ENCODE measurements at regions of chr2 and their contacts with region 1.

Region 1: GRCh38 chr2:191878576-191879279 is 31.8 kb upstream of the CAVIN2 start:
- DNase-seq: peak; percentile 91
- H3K4me3 ChIP-seq: no peak overlapping the region
- H3K27ac ChIP-seq: peak overlapping the region; percentile 44
- H3K4me1 ChIP-seq: peaks cover 18% of the 10 kb centered on the region
- H3K27me3 ChIP-seq: no peaks in the 10 kb centered on the region
- CTCF ChIP-seq: no peak
- POLR2A ChIP-seq: no peak

Region 2: DNA sequence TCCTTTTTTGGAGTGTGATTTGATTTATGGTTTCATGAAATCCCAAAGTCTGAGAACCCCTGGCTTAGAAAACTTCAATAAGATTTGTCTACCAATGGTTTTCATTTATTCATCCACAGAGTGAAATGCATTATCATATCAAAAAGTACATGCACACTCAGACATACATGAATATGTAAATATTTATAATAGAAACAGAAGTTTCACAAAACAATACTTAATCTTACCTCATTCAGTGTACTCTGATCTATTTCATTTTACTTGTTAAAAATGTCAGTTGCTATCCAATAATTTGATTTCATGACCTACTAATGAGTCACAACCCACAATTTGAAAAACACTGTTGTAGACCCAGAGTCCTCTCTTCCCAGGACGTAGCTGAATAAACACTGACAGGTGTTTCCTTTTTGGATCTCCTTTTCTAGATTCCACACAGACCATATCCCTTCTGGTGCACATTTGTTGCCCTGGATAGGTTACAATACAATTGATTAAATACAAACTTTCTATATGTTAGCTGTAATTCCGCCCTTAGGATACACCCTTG is 21.4 kb before region 1 on chr2:
- CTCF ChIA-PET with region 1: no interaction called
- POLR2A ChIA-PET with region 1: no interaction called
- dilution Hi-C with region 1: no loop called
- intact Hi-C with region 1: loop called (anchors 1 kb)
- DNase-seq: peak; percentile 97
- H3K4me3 ChIP-seq: no peak overlapping the region
- H3K27ac ChIP-seq: peak overlapping the region; percentile 93
- H3K4me1 ChIP-seq: peaks cover 56% of the 10 kb centered on the region
- H3K27me3 ChIP-seq: no peaks in the 10 kb centered on the region
- CTCF ChIP-seq: no peak
- POLR2A ChIP-seq: peak; percentile 74

Region 3: GRCh38 chr2:191894681-191895147 is 16.0 kb after region 1 on chr2:
- CTCF ChIA-PET with region 1: no interaction called
- POLR2A ChIA-PET with region 1: no interaction called
- dilution Hi-C with region 1: no loop called
- intact Hi-C with region 1: loop called (anchors 1 kb)
- DNase-seq: peak; percentile 61
- H3K4me3 ChIP-seq: no peak overlapping the region
- H3K27ac ChIP-seq: peak overlapping the region; percentile 28
- H3K4me1 ChIP-seq: peaks cover 27% of the 10 kb centered on the region
- H3K27me3 ChIP-seq: no peaks in the 10 kb centered on the region
- CTCF ChIP-seq: no peak
- POLR2A ChIP-seq: no peak

Measured in endothelial cell of umbilical vein (primary cell).